Panc1 (cell line): ENCODE measurements at regions of chr15 and their contacts with region 1.

Region 1: GRCh38 chr15:75502360-75502759 is 50.9 kb upstream of the SIN3A start:
- DNase-seq: no peak
- ATAC-seq: no peak
- H3K4me3 ChIP-seq: no peak overlapping the region
- H3K27ac ChIP-seq: no peak overlapping the region
- H3K4me1 ChIP-seq: no peaks in the 10 kb centered on the region
- H3K27me3 ChIP-seq: no peaks in the 10 kb centered on the region
- CTCF ChIP-seq: no peak

Region 2: DNA sequence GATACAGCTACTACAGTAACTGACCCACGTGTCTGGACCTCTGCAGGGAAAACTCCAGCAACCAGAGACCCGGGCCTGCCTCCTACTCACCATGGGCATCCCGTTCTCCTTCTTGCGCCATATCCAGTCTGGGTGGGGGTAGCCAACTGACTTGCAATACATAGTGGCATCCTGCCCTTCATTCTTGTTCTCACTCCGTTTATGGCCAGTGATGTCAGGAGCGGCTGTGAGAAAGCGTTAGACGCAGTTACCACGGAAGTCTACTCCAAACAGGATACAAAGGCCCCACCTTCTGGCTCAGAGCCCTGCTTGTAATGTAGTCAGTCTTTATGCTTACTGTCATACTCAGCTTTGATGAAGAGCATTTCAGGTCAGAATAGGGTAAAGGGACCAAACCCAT is 1928.8 kb before region 1 on chr15:
- CTCF ChIA-PET with region 1: no interaction called
- POLR2A ChIA-PET with region 1: no interaction called
- in situ Hi-C with region 1: no loop called
- intact Hi-C with region 1: no loop called
- DNase-seq: no peak
- ATAC-seq: no peak
- H3K4me3 ChIP-seq: no peak overlapping the region
- H3K27ac ChIP-seq: no peak overlapping the region
- H3K4me1 ChIP-seq: no peaks in the 10 kb centered on the region
- H3K27me3 ChIP-seq: no peaks in the 10 kb centered on the region
- CTCF ChIP-seq: no peak

Region 3: GRCh38 chr15:75309711-75310110 is 192.6 kb before region 1 on chr15:
- CTCF ChIA-PET with region 1: no interaction called
- POLR2A ChIA-PET with region 1: no interaction called
- in situ Hi-C with region 1: no loop called
- intact Hi-C with region 1: no loop called
- DNase-seq: no peak
- ATAC-seq: no peak
- H3K4me3 ChIP-seq: no peak overlapping the region
- H3K27ac ChIP-seq: no peak overlapping the region
- H3K4me1 ChIP-seq: peaks cover 4% of the 10 kb centered on the region
- H3K27me3 ChIP-seq: peaks cover 3% of the 10 kb centered on the region; the same call in 1 of the 2 replicates
- CTCF ChIP-seq: no peak

Region 4: GRCh38 chr15:75532413-75533147 is 30.2 kb after region 1 on chr15:
- CTCF ChIA-PET with region 1: no interaction called
- POLR2A ChIA-PET with region 1: interaction called, 12 read pairs
- in situ Hi-C with region 1: no loop called
- intact Hi-C with region 1: no loop called
- DNase-seq: peak; percentile 69
- ATAC-seq: peak; percentile 94
- H3K4me3 ChIP-seq: peak overlapping the region in 1 of 2 experiments; percentile 11; a peak in 1 of 4 replicates
- H3K27ac ChIP-seq: peak overlapping the region; percentile 49
- H3K4me1 ChIP-seq: peaks cover 33% of the 10 kb centered on the region
- H3K27me3 ChIP-seq: no peaks in the 10 kb centered on the region
- CTCF ChIP-seq: no peak; the same call in 1 of the 2 replicates

Region 5: DNA sequence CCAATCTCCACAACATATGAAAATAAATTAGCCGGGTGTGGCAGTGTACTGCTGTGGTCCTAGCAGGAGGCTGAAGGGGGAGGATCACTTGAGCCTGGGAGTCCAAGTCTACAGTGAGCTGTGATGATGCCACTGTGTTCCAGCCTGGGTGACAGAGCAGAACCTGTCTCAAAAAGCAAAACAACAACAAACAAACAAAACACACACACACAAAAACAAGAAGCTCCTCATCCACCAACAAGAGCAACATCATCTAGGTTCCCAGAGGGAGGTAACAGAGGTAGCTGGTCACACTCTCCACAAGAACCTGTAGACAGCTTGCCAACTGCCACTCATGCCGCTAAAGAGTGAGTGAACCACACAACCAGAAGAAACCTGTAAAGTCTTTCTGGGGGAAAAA is 42.0 kb after region 1 on chr15:
- CTCF ChIA-PET with region 1: no interaction called
- POLR2A ChIA-PET with region 1: interaction called, 10 read pairs
- in situ Hi-C with region 1: no loop called
- intact Hi-C with region 1: no loop called
- DNase-seq: no peak
- ATAC-seq: peak; percentile 42; the same call in 1 of the 2 replicates
- H3K4me3 ChIP-seq: no peak overlapping the region
- H3K27ac ChIP-seq: no peak overlapping the region
- H3K4me1 ChIP-seq: peaks cover 15% of the 10 kb centered on the region
- H3K27me3 ChIP-seq: no peaks in the 10 kb centered on the region
- CTCF ChIP-seq: no peak